ENCODE measurements at regions of chr1 and their contacts with region 1.

Region 1: GRCh38 chr1:41890825-41891198 is 27.9 kb downstream of the HIVEP3 start:
- DNase-seq: no peak
- ATAC-seq: peak; percentile 25; the same call in 1 of the 2 replicates
- H3K4me3 ChIP-seq: no peak overlapping the region; a peak in 1 of 4 replicates
- H3K27ac ChIP-seq: peak overlapping the region; percentile 79
- H3K4me1 ChIP-seq: peaks cover 31% of the 10 kb centered on the region
- H3K27me3 ChIP-seq: no peaks in the 10 kb centered on the region
- CTCF ChIP-seq: no peak

Region 2: GRCh38 chr1:41783189-41783639 is 107.6 kb before region 1 on chr1:
- CTCF ChIA-PET with region 1: no interaction called
- POLR2A ChIA-PET with region 1: no interaction called
- in situ Hi-C with region 1: no loop called
- intact Hi-C with region 1: no loop called
- DNase-seq: peak; percentile 87
- ATAC-seq: peak; percentile 94
- H3K4me3 ChIP-seq: peak overlapping the region in 1 of 2 experiments; percentile 15; a peak in 1 of 4 replicates
- H3K27ac ChIP-seq: 0 out of 2 replicates have a peak overlapping the region, but pooled peaks have one; percentile 8
- H3K4me1 ChIP-seq: no peaks in the 10 kb centered on the region
- H3K27me3 ChIP-seq: no peaks in the 10 kb centered on the region
- CTCF ChIP-seq: no peak

Region 3: DNA sequence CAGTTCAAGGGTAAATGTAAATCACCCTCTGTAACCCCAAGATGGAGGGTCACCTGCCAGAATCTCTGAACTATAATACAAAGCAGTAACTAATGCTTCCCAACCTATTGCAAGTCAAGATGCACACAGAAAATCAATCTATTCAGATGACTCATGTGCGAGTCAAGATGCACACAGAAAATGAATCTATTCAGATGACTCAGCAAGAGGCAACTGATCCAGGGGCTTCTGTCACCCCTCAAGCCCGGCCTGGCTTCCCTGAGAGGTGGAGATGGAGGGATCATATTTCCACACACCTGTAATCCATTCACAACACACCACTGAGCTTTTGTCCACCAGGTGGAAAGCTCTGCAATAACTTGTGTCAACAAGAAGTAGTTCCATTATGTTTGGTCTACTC is 45.3 kb after region 1 on chr1:
- CTCF ChIA-PET with region 1: no interaction called
- POLR2A ChIA-PET with region 1: no interaction called
- in situ Hi-C with region 1: no loop called
- intact Hi-C with region 1: no loop called
- DNase-seq: no peak
- ATAC-seq: no peak; the same call in 1 of the 2 replicates
- H3K4me3 ChIP-seq: no peak overlapping the region
- H3K27ac ChIP-seq: no peak overlapping the region
- H3K4me1 ChIP-seq: no peaks in the 10 kb centered on the region
- H3K27me3 ChIP-seq: no peaks in the 10 kb centered on the region
- CTCF ChIP-seq: peak; percentile 12; the same call in 1 of the 2 replicates

Region 4: GRCh38 chr1:42518908-42519307 is 628.1 kb after region 1 on chr1:
- CTCF ChIA-PET with region 1: no interaction called
- POLR2A ChIA-PET with region 1: interaction called, 15 read pairs
- in situ Hi-C with region 1: no loop called
- intact Hi-C with region 1: no loop called
- DNase-seq: no peak
- ATAC-seq: no peak
- H3K4me3 ChIP-seq: no peak overlapping the region
- H3K27ac ChIP-seq: no peak overlapping the region
- H3K4me1 ChIP-seq: no peaks in the 10 kb centered on the region
- H3K27me3 ChIP-seq: no peaks in the 10 kb centered on the region
- CTCF ChIP-seq: no peak